Tibial artery (tissue), 4 donors: ENCODE measurements at regions of chr3 and their contacts with region 1.

Region 1: DNA sequence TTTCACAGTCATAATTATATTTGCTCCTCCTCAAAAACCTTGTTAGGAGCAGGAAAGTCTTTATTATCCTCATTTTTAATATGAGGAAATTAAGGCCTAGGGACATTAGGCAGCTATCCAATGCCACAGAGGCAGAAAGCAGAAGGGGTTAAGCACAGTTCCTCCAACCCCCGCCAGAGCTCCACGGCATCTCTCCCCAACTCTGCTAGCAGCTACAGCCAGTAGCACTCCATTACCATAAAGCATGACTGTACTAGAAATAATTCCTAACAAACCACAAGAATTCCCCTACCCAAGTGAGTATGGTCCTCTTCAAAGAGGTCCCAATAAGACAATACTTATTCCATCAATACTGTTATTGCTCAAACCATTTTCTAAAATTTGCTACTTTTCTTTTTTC is 9.8 kb downstream of the HEG1 start:
- DNase-seq: no peak
- H3K4me3 ChIP-seq: no peak overlapping the region
- H3K27ac ChIP-seq: no peak overlapping the region
- H3K4me1 ChIP-seq: peaks cover 0 to 68% (median 48%) of the 10 kb centered on the region in 4 donors
- H3K27me3 ChIP-seq: no peaks in the 10 kb centered on the region
- CTCF ChIP-seq: no peak

Region 2: DNA sequence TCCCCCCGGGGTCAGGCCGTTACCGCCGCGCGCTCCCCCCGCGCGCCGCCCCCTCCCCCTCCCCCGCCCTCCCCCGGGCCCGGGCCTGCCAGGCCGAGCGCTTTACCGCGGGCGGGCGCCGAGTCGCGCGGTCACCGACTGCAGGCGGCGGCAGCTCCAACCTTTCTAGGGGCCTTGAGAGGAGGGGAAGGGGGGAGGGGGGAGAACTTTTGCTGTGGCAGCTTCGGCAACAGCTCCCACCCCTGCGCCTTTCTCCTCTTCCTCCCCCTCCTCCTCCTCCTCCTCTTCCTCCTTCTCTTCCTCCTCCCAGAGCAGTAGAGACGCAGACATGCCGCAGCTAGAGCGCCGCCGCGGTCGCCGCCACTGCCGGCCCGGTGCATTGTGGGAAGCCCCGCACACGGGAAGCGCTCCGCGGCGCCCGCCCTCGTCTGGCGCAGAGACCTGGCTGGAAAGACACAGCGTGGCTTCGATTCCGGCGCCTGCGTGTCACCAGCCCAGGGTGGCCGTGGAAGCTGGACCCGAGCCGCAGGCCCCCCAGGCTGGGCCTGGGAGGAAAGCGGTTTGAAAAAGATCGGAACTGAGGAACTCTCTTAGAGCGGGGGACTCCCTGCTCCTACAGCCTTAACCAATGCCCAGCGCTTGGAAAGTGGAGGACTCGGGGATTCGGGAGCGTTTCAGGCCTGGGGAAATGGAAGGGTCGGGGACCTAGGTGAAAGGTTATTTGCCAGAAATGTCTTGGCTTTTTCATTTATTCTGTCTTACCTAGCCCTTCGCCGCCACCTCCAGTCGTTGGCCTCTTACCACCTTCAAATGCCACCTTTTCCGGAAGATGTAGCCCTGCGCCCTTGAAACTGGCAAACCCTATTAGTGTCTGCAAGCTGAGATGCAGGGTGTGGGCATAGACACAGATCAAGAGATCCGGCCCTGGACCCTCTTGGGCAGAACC is 329.3 kb after region 1 on chr3 and contains the start of gene ZNF148:
- intact Hi-C with region 1: loop called (anchors 10 kb)
- DNase-seq: peak; percentile 85 to 95
- H3K4me3 ChIP-seq: peak within 1 kb of the TSS; percentile 87 to 92
- H3K27ac ChIP-seq: peak within 1 kb of the TSS; percentile 90 to 95
- H3K4me1 ChIP-seq: peaks cover 0 to 37% (median 24%) of the 10 kb centered on the region in 4 donors
- H3K27me3 ChIP-seq: no peaks in the 10 kb centered on the region
- CTCF ChIP-seq: no peak